OCI-LY7 (cell line): ENCODE measurements at regions of chr15 and their contacts with region 1.

Region 1: GRCh38 chr15:68550481-68551295 is 28.1 kb upstream of the CORO2B start:
- DNase-seq: peak; percentile 79
- H3K4me3 ChIP-seq: no peak overlapping the region
- H3K27ac ChIP-seq: no peak overlapping the region
- H3K4me1 ChIP-seq: peaks cover 9% of the 10 kb centered on the region
- CTCF ChIP-seq: peak; percentile 97

Region 2: DNA sequence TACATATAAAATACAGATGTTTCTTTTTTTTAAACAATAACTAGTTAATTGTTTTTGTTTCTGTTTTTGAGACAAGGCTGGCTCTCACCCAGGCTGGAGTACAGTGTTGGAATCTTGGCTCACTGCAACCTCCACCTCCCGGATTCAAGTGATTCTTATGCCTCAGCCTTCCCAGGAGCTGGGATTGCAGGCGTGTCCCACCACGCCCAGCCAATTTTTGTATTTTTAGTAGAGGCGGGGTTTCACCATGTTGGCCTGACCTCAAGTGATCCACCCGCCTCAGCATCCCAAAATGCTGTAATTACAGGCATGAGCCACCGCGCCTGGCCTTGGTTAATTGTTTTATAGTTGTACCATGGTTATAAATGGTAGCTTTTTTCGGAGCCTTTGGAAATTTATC is 424.3 kb before region 1 on chr15:
- CTCF ChIA-PET with region 1: no interaction called
- POLR2A ChIA-PET with region 1: no interaction called
- intact Hi-C with region 1: no loop called
- DNase-seq: no peak
- H3K4me3 ChIP-seq: no peak overlapping the region
- H3K27ac ChIP-seq: no peak overlapping the region
- H3K4me1 ChIP-seq: no peaks in the 10 kb centered on the region
- CTCF ChIP-seq: no peak

Region 3: DNA sequence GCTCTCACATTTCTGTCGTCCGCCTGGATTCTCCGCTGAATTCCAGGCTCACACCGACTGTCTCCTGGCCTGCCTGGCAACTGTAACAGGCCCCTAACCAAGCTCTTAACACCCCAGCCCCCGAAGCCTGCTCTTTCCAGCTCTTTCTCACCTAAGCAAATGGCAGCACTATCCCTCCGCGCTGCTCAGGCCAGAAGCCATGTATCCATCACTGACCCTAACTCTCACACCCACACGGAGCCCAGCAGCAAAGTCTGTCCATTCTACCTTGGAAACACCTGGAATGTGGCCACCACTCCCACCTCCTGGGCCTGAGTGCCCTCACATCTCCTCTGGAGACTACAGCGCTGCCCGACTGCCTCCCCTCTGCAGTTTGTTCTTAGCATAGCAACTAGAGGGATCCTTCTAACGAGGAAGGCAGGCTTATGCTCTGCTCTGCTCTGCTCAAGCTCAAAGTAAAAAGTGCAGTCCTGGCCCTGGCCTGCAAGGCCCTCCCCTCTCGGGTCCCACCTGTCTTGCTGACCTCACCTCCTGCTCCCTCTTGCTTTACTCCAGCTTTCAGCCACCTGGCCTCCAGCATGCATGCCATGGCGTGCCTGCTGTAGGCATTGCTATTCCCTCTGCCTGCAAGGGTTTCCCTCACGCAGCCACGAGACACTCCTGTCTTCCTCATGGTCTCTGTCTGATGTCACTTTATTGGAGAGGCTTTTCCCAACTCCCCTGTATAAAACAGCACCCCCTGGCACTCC is 245.9 kb before region 1 on chr15:
- CTCF ChIA-PET with region 1: interaction called, 3 read pairs
- POLR2A ChIA-PET with region 1: no interaction called
- intact Hi-C with region 1: loop called (anchors 5 kb)
- DNase-seq: no peak
- H3K4me3 ChIP-seq: no peak overlapping the region
- H3K27ac ChIP-seq: no peak overlapping the region
- H3K4me1 ChIP-seq: peaks cover 5% of the 10 kb centered on the region
- CTCF ChIP-seq: no peak

Region 4: DNA sequence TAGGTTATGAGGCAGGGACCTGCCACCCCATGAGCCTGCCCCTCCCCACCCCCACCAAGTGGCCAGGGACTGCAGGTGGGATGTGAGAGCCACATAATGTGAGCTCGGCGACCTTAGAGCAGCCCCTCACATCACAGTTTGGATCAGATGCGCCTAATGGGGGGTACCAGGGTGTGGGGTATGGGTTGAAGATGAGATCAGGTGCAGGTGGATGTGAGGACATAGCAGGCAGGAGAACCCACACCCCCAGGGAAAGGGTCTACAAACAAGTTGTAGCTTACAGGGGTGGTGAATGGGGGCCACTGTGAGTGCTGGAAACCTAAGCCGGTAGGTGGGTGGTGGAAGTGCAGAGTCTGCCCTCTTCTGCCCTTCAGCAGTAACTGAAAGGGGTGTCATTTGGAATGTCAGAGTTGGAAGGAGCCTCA is 122.1 kb after region 1 on chr15:
- CTCF ChIA-PET with region 1: interaction called, 19 read pairs
- POLR2A ChIA-PET with region 1: interaction called, 7 read pairs
- intact Hi-C with region 1: loop called (anchors 1 kb)
- DNase-seq: peak; percentile 70
- H3K4me3 ChIP-seq: no peak overlapping the region
- H3K27ac ChIP-seq: peak overlapping the region; percentile 14
- H3K4me1 ChIP-seq: peaks cover 47% of the 10 kb centered on the region
- CTCF ChIP-seq: peak; percentile 76

Region 5: DNA sequence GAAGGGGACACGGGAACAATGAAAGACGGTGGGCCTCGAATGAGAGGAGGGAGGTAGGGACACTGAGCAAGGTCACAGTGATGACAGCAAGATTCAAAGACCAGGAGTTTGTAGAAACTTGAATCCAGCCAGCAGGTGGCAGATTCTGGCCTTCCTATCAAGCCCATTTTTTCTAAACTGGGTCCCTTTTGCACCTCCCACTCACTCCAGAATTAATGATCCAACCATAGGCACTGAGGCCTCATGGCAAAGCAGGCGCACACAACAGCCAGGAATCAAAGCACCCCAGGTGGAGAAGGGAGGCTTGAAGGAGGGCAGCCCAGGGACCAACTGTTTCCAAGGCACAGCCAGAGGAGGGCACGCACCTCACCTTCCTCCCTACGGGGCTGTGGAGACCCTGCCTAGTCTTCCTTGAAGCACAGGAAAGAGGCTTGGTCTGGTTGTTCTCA is 179.8 kb after region 1 on chr15:
- CTCF ChIA-PET with region 1: no interaction called
- POLR2A ChIA-PET with region 1: no interaction called
- intact Hi-C with region 1: loop called (anchors 1 kb)
- DNase-seq: peak; percentile 71
- H3K4me3 ChIP-seq: no peak overlapping the region
- H3K27ac ChIP-seq: no peak overlapping the region
- H3K4me1 ChIP-seq: peaks cover 7% of the 10 kb centered on the region
- CTCF ChIP-seq: peak; percentile 86

Region 6: GRCh38 chr15:68773036-68773435 is 222.3 kb after region 1 on chr15:
- CTCF ChIA-PET with region 1: no interaction called
- POLR2A ChIA-PET with region 1: no interaction called
- intact Hi-C with region 1: loop called (anchors 2 kb)
- DNase-seq: no peak
- H3K4me3 ChIP-seq: no peak overlapping the region
- H3K27ac ChIP-seq: no peak overlapping the region
- H3K4me1 ChIP-seq: no peaks in the 10 kb centered on the region
- CTCF ChIP-seq: no peak

Region 7: GRCh38 chr15:68875377-68876116 is 324.9 kb after region 1 on chr15:
- CTCF ChIA-PET with region 1: interaction called, 3 read pairs
- POLR2A ChIA-PET with region 1: no interaction called
- intact Hi-C with region 1: loop called (anchors 2 kb)
- DNase-seq: peak; percentile 94
- H3K4me3 ChIP-seq: peak overlapping the region; percentile 22
- H3K27ac ChIP-seq: peak overlapping the region; percentile 29
- H3K4me1 ChIP-seq: peaks cover 38% of the 10 kb centered on the region
- CTCF ChIP-seq: peak; percentile 93

Region 8: GRCh38 chr15:68924866-68925560 is 374.3 kb after region 1 on chr15:
- CTCF ChIA-PET with region 1: interaction called, 9 read pairs
- POLR2A ChIA-PET with region 1: no interaction called
- intact Hi-C with region 1: loop called (anchors 1 kb)
- DNase-seq: peak; percentile 88
- H3K4me3 ChIP-seq: no peak overlapping the region
- H3K27ac ChIP-seq: no peak overlapping the region
- H3K4me1 ChIP-seq: peaks cover 19% of the 10 kb centered on the region
- CTCF ChIP-seq: peak; percentile 100